Activated CD8-positive, alpha-beta memory T cell treated with anti-CD3 and anti-CD28 coated beads, Interleukin-2, amount 10 ng/mL, durations not matched to agents 7 days and 5 days (primary cell): ENCODE measurements at regions of chr3 and their contacts with region 1.

Region 1: DNA sequence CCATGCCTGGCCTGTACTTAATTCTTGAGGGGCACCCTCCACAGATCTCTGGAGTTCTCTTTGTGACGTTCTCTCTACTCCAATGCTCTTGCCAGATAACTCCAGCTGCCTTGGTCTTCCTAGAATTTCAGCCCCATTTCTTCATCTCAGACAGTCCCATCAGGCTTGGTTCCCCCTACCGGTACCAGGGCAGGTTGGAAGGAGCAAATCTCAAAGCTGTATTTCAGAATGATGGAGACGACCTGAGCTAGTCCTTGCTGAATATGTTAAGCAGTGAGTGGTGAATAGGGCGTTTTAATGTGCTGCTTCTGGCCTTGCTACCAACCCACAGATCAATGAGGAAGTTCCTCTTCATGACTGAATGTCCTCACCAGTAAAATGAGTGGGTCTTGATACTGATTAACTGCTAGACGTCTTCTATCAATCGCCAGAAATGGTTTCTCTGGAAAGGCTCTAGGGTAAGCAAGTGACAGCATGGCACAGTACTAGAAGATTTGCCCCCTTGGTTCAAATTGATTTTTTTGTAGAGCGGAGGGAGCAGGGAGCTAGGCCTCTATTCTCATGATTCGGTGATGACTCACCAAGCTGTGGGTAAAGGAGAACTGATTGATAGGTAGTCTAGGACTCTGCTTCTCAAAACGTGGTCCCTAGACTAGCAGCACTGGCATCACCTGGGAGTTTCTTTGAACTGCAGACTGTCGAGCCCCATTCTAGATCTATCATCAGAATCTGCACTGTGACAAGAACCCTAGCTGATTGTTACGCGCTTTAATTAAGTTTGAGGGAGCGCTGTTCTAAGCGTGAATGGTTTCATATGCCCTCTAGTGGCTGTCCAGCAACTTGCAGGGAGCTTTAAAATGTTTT is 67.8 kb downstream of the UBP1 start:
- DNase-seq: peak; percentile 65
- ATAC-seq: peak; percentile 74
- H3K4me3 Mint-ChIP-seq: no peak overlapping the region
- H3K27ac Mint-ChIP-seq: no peak overlapping the region
- H3K4me1 Mint-ChIP-seq: peaks cover 8% of the 10 kb centered on the region
- H3K27me3 Mint-ChIP-seq: peaks cover 11% of the 10 kb centered on the region

Region 2: GRCh38 chr3:33113772-33114621 is 258.5 kb before region 1 on chr3 and contains the start of gene CRTAP:
- CTCF ChIA-PET with region 1: interaction called, 10 read pairs
- DNase-seq: peak; percentile 91
- ATAC-seq: peak; percentile 87
- H3K4me3 Mint-ChIP-seq: peak within 1 kb of the TSS; percentile 79
- H3K27ac Mint-ChIP-seq: peak within 1 kb of the TSS; percentile 82
- H3K4me1 Mint-ChIP-seq: peaks cover 47% of the 10 kb centered on the region
- H3K27me3 Mint-ChIP-seq: no peaks in the 10 kb centered on the region
- total RNA-seq, gene CRTAP: 28.0 to 40.3 TPM

Region 3: DNA sequence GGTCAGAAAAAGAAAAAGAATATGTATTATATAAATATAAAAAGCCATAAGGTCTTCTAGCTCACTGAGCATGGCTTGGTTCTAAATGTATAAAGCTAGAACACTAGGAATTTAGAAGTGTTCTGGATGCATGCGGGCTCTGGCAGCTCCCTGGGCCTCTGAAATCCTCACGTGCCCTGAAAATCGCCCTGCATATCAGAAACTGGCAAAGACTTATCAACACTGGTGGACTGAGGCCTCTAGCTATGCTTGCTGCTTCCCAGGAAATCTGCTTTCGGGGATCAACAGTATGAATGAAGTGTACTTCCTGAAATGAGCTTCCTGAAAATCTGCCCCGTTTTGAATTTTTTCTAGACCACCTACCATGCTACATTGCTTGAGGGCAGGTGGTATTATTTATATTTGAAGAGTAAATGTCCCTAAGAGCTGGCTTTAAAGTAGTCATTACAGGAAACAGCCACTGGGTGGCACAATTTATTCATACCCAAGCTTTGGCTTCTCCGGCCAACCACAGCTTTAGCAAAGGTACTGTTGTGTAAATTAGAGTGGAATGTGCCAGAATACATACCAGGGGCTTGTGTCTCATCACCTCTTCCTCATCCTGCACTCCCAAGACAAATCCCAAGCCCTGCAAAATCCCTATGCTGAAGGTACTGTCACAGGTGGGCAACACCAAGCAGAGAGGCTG is 241.0 kb before region 1 on chr3:
- CTCF ChIA-PET with region 1: interaction called, 80 read pairs
- DNase-seq: peak; percentile 54
- ATAC-seq: peak; percentile 73
- H3K4me3 Mint-ChIP-seq: no peak overlapping the region
- H3K27ac Mint-ChIP-seq: no peak overlapping the region
- H3K4me1 Mint-ChIP-seq: peaks cover 6% of the 10 kb centered on the region
- H3K27me3 Mint-ChIP-seq: no peaks in the 10 kb centered on the region

Region 4: GRCh38 chr3:33231756-33232465 is 140.5 kb before region 1 on chr3:
- CTCF ChIA-PET with region 1: no interaction called
- DNase-seq: no peak
- ATAC-seq: no peak
- H3K4me3 Mint-ChIP-seq: no peak overlapping the region
- H3K27ac Mint-ChIP-seq: no peak overlapping the region
- H3K4me1 Mint-ChIP-seq: no peaks in the 10 kb centered on the region
- H3K27me3 Mint-ChIP-seq: peaks cover 36% of the 10 kb centered on the region

Region 5: DNA sequence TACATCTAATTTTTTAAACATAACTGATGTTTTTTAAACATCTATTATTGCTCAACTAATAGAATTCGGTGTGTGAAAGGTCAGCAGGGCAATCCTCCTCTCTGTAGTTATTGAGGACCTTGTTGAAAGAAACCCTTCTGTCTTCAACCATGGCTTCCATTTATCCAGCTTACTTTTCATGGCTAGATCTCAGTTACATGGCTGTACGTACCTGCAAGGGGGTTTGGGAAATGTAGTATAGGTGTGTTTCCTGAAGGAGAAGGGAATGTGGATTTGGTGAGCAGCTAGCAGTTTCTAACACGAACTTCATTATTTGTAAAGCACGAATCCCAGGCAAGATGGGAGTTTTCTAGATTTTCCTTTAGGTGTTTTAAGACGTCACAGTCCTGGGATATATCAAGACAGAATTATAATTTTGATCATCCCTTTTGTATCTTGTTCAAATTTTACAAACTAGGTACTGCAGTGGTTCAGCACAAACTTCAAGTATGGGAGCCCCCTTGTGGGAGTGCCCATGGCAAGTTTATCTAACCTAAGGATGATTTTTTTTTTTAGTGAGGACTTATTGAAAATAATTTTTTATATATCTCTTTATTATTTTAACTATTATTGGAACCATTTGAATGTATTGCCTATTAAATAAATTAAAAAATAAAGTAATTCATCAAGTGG is 53.6 kb before region 1 on chr3:
- CTCF ChIA-PET with region 1: no interaction called
- DNase-seq: no peak
- ATAC-seq: no peak
- H3K4me3 Mint-ChIP-seq: no peak overlapping the region
- H3K27ac Mint-ChIP-seq: no peak overlapping the region
- H3K4me1 Mint-ChIP-seq: no peaks in the 10 kb centered on the region
- H3K27me3 Mint-ChIP-seq: peaks cover 45% of the 10 kb centered on the region

Region 6: DNA sequence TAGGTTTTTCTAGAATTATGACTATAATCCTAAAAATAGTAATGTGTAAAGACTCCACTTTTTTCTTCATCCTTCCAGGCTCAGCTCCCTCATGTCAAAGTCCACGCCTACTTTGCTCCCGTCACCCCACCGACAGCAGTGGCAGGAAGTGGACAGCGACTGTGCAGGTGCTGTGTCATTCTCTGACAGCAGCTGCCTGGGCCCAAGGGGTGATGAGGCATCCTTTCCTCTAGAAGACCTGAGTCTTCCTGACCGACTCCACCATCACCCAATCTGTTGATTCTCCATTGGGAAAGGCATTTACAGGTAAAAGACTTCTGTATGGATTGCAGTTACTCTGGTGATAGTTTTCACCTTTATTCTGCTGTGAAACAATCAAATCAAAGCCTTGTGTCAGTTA is 13.0 kb after region 1 on chr3:
- CTCF ChIA-PET with region 1: interaction called, 33 read pairs
- DNase-seq: peak; percentile 88
- ATAC-seq: peak; percentile 97
- H3K4me3 Mint-ChIP-seq: no peak overlapping the region
- H3K27ac Mint-ChIP-seq: peak overlapping the region; percentile 77
- H3K4me1 Mint-ChIP-seq: peaks cover 23% of the 10 kb centered on the region
- H3K27me3 Mint-ChIP-seq: no peaks in the 10 kb centered on the region

Region 7: DNA sequence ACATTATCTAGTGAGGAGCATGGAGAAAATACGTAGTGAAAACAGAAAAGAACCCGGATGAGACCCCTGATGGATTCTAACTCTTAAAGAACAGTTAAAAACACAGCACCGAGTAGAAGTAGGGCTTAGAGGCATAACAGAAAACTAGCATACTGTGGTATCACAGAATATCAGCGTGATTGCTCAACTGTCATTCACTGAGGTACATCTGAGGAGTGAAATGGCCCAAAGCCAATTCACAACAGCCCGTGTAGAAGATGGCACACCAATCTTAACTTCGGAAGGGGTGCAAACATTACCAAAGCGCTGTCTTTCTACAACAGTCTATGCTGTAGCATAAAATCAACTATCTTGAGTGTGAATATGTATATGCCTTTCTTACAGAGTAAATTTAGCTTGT is 343.8 kb after region 1 on chr3:
- CTCF ChIA-PET with region 1: interaction called, 11 read pairs
- DNase-seq: no peak
- ATAC-seq: no peak
- H3K4me3 Mint-ChIP-seq: peak overlapping the region; percentile 92
- H3K27ac Mint-ChIP-seq: no peak overlapping the region
- H3K4me1 Mint-ChIP-seq: peaks cover 17% of the 10 kb centered on the region
- H3K27me3 Mint-ChIP-seq: no peaks in the 10 kb centered on the region